ENCODE measurements at regions of chr12 and their contacts with region 1.

Region 1: DNA sequence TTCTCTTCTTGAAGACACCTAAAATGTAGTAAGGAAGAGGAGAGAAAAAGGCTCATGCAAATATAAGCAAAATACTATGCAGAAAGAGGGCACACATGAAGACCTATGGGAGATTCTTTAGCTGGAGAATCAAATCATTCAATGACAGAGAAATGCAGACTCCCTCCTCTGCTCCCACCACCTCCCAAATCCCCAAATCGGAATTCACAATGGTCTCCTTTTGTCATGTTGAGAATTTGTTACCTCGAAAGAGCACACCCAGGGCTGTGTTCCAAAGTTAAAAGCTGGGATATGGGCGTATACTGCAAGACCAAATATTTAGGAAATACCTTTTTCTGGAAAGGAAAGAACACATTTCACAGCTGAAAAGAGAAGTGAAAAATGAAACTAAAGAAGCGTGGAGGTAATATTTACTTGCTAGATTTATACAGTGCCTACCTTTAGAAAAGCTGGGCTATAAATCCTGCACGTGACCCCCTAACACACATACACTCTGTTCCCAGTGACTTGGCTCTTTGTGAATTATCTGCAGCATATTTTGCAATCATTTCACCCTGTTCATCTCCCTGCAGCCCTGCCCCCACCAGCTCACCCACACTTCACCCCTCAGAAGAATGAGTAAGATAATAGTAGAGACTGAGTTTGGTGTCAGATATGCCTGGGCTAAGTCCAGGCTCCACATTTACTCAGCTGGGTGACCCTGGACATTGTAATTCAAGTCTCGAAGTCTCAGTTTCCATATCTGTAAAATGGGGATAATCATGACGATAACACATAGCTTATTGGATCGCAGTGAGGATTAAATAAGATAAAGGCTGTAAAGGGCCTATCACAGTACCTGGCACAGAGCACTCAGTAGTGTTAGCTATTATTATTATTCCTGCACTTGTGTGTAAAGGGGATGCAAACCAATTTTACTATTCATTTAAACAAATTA is 2.9 kb upstream of the CACNA1C start:
- DNase-seq: no peak
- ATAC-seq: no peak
- H3K4me3 ChIP-seq: no peak overlapping the region
- H3K27ac ChIP-seq: no peak overlapping the region
- H3K4me1 ChIP-seq: no peaks in the 10 kb centered on the region; the same call in 2 of the 3 replicates
- CTCF ChIP-seq: no peak
- EP300 ChIP-seq: no peak
- POLR2A ChIP-seq: no peak
- RAD21 ChIP-seq: no peak

Region 2: GRCh38 chr12:2034633-2035430 is 15.0 kb before region 1 on chr12:
- CTCF ChIA-PET with region 1: interaction called, 13 read pairs
- POLR2A ChIA-PET with region 1: no interaction called
- DNase-seq: peak; percentile 75 to 83
- ATAC-seq: peak; percentile 95 to 99
- H3K4me3 ChIP-seq: peak overlapping the region; percentile 34
- H3K27ac ChIP-seq: peak overlapping the region; percentile 35 to 57; a peak in 3 of 6 replicates
- H3K4me1 ChIP-seq: 0 out of 3 replicates have a peak, but pooled peaks cover 3% of the 10 kb centered on the region
- CTCF ChIP-seq: peak; percentile 85
- EP300 ChIP-seq: no peak
- POLR2A ChIP-seq: peak; percentile 37; the same call in 1 of the 2 replicates
- RAD21 ChIP-seq: peak; percentile 58 to 74

Region 3: GRCh38 chr12:2068653-2069052 is 18.8 kb after region 1 on chr12:
- CTCF ChIA-PET with region 1: no interaction called
- POLR2A ChIA-PET with region 1: no interaction called
- DNase-seq: no peak
- ATAC-seq: no peak
- H3K4me3 ChIP-seq: no peak overlapping the region
- H3K27ac ChIP-seq: no peak overlapping the region
- H3K4me1 ChIP-seq: no peaks in the 10 kb centered on the region
- CTCF ChIP-seq: no peak
- EP300 ChIP-seq: no peak
- POLR2A ChIP-seq: no peak
- RAD21 ChIP-seq: no peak

Measured in A549 (cell line).